Heart right ventricle (tissue), 16 donors: ENCODE measurements at regions of chr15 and their contacts with region 1.

Region 1: DNA sequence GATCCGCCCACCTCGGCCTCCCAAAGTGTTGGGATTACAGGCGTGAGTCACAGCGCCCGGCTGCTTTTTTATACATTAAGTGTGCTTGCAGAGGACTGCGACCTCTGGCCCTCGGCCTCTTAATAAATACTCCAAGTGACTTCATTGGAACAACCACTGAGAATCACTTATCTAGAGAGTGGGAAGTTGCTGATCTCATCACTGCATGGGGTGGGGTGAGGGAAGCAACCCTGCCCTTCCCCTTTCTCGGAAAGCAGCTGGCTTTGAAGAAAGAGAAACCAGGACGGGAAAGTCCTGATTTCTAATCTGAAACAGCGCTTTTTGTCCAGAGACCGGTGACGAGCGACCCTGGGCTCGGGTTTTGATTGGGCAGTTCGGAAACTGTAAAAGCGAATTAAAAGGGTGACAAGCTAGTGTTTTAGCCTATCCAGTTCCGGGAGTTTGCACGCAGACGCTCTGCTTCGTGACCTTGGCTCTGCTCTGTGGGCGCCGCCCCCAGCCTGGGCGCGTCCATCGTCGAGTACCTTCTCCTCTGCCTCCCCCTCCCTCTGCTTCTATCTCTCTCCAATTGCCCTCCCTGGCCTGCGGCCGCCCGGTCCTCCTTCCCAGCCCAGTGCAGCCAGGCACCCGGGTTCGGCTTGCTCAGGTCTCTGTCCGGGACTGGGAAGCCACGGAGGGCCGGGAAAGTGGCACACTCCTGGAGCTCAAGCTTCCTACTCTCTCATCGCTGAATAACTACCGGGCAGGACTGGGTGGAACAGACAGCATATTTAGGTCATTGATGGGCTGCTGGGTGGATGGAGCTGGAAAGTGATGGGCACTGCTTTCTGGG is 7.5 kb upstream of the TRIM69 start:
- DNase-seq: peak; percentile 92 to 98
- ATAC-seq: peak; percentile 94 to 99 (median 96)
- H3K4me3 ChIP-seq: peak overlapping the region; percentile 66 to 87 (median 74)
- H3K27ac ChIP-seq: peak overlapping the region; percentile 95 to 99 (median 98)
- H3K4me1 ChIP-seq: peaks cover 3 to 75% (median 43%) of the 10 kb centered on the region in 9 donors
- H3K27me3 ChIP-seq: no peaks in the 10 kb centered on the region
- CTCF ChIP-seq: peak in 1 of 9 donors; percentile 12

Region 2: DNA sequence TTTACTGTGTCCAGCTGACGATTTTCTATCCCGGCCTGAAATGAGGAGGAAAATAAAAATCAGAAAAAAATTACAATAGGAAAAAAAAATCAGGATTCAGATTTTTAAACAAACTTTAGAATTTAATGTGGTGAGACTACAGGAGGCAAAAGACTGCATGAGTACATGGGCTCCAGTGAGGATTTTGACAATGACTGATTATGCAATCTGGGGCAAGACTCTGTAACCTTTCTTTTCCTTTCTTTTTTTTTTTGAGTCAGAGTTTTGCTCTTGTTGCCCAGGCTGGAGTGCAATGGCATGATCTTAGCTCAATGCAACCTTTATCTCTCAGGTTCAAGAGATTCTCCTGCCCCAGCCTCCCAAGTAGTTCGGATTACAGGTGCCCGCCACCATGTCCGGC is 95.2 kb before region 1 on chr15:
- intact Hi-C with region 1: no loop called
- DNase-seq: no peak
- ATAC-seq: no peak
- H3K4me3 ChIP-seq: no peak overlapping the region
- H3K27ac ChIP-seq: peak overlapping the region in 1 of 10 donors; percentile 42
- H3K4me1 ChIP-seq: peaks cover 0 to 9% (median 0%) of the 10 kb centered on the region in 9 donors
- H3K27me3 ChIP-seq: no peaks in the 10 kb centered on the region
- CTCF ChIP-seq: no peak

Region 3: DNA sequence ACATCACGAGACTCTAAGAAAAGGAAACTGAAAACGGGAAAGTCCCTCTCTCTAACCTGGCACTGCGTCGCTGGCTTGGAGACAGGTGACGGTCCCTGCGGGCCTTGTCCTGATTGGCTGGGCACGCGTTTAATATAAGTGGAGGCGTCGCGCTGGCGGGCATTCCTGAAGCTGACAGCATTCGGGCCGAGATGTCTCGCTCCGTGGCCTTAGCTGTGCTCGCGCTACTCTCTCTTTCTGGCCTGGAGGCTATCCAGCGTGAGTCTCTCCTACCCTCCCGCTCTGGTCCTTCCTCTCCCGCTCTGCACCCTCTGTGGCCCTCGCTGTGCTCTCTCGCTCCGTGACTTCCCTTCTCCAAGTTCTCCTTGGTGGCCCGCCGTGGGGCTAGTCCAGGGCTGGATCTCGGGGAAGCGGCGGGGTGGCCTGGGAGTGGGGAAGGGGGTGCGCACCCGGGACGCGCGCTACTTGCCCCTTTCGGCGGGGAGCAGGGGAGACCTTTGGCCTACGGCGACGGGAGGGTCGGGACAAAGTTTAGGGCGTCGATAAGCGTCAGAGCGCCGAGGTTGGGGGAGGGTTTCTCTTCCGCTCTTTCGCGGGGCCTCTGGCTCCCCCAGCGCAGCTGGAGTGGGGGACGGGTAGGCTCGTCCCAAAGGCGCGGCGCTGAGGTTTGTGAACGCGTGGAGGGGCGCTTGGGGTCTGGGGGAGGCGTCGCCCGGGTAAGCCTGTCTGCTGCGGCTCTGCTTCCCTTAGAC is 17.3 kb before region 1 on chr15 and contains the start of gene B2M:
- intact Hi-C with region 1: loop called in 7 of 10 experiments (anchors 1 to 2 kb)
- DNase-seq: peak; percentile 95
- ATAC-seq: peak; percentile 94 to 98 (median 96)
- H3K4me3 ChIP-seq: peak within 1 kb of the TSS; percentile 80 to 99 (median 91)
- H3K27ac ChIP-seq: peak within 1 kb of the TSS; percentile 95 to 100 (median 99)
- H3K4me1 ChIP-seq: peaks cover 5 to 49% (median 34%) of the 10 kb centered on the region in 9 donors
- H3K27me3 ChIP-seq: no peaks in the 10 kb centered on the region
- CTCF ChIP-seq: peak in 1 of 9 donors; percentile 0
- total RNA-seq, gene B2M: 782 to 5,382 (median 1,085) TPM

Region 4: GRCh38 chr15:44798826-44799225 is 70.0 kb after region 1 on chr15:
- intact Hi-C with region 1: no loop called
- DNase-seq: no peak
- ATAC-seq: no peak
- H3K4me3 ChIP-seq: no peak overlapping the region
- H3K27ac ChIP-seq: no peak overlapping the region
- H3K4me1 ChIP-seq: peaks cover 0 to 11% (median 0%) of the 10 kb centered on the region in 9 donors
- H3K27me3 ChIP-seq: no peaks in the 10 kb centered on the region
- CTCF ChIP-seq: peak in 2 of 9 donors; percentile 19 to 21